Left ventricle myocardium inferior (tissue), 1 donor: ENCODE measurements at regions of chr6 and their contacts with region 1.

Region 1: GRCh38 chr6:138250513-138251247 is 32.4 kb upstream of the PBOV1 start:
- DNase-seq: peak; percentile 17
- H3K4me3 ChIP-seq: peak overlapping the region; percentile 6
- H3K27ac ChIP-seq: no peak overlapping the region
- H3K4me1 ChIP-seq: no peaks in the 10 kb centered on the region
- H3K27me3 ChIP-seq: no peaks in the 10 kb centered on the region
- CTCF ChIP-seq: no peak

Region 2: DNA sequence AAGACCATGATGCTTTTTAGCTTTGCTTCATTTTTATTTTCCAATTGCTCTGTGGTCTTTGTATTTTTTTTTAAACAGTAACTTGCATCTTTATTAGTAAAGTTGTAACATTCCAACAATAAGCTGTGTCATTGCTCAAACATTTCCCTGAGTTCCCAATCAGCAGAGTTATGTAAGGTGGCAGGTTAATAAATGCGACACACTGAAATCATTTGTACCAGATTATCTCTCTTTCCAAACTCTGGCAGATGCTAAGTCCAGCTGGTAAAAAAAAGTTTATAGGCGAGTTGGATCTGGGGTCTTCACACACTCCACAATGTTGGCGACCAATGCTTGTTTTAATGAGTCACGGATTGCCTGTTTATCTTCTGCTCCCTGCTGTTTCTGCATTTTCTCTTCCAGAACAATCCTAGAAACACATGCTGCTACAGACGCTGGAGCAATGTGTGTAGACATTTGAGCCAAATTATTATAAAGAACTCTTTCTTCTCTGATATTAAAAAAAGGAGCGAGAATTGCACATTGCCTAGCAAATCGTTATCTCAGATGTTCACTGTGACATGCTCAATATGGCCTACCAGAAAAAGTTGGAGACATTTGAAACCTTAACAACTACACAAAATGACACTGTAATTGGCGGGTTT is 917.9 kb before region 1 on chr6:
- intact Hi-C with region 1: loop called (anchors 10 kb)
- DNase-seq: no peak
- H3K4me3 ChIP-seq: no peak overlapping the region
- H3K27ac ChIP-seq: peak overlapping the region; percentile 50
- H3K4me1 ChIP-seq: peaks cover 10% of the 10 kb centered on the region
- H3K27me3 ChIP-seq: no peaks in the 10 kb centered on the region
- CTCF ChIP-seq: no peak